ENCODE measurements at regions of chr3 and their contacts with region 1.

Region 1: DNA sequence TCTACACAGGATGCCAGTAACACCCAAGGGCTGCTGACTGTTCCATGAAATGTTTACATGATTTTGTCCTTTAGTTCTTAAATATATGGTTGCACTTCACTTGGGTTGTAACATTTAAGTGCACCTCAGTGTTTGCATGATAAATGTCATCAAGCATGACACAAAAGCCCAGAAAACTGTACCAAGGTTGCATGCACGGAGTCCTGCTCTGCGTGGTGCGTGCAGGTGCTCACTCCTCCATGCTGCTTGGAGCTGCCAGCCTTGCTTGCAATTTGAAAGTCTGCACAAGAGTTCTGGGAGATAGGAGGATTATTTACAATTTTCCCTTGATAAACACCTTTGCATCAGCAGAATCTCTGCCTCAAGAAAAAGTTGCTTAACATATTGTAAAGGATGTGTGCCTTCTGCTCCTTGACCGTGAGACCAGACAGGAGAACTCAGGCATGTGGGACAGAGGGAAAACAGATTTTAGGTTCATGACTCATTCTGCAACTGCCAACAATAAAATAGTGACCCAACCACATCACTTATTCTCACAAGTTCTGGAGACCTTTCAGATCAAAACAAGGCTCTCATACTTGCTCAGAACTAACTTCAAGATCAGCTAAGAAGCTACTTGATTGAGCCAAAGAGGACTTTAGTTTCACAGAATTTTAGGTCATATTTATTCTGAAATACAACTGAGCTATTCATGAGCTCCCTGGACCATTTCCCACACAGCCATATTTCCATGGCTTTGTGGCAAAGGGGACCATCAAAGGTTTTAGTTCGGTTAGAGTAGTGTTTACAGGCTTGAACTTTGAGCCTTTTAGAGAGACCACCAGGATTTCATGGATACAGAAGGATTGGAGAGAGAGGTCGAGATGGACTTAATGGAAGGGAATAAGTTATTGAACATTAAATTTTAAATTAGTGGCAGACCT is 128.4 kb upstream of the ZBED2 start:
- DNase-seq: no peak
- CTCF ChIP-seq: no peak

Region 2: GRCh38 chr3:111859974-111860859 is 136.7 kb after region 1 on chr3:
- in situ Hi-C with region 1: loop called (anchors 10 kb)
- DNase-seq: peak; percentile 76
- CTCF ChIP-seq: no peak

Region 3: GRCh38 chr3:112101916-112102315 is 378.4 kb after region 1 on chr3:
- in situ Hi-C with region 1: no loop called
- DNase-seq: no peak
- CTCF ChIP-seq: no peak